ENCODE measurements at regions of chr18 and their contacts with region 1.

Region 1: GRCh38 chr18:10841203-10841602 is 308.2 kb downstream of the PIEZO2 start:
- DNase-seq: no peak
- H3K4me3 ChIP-seq: no peak overlapping the region
- H3K27ac ChIP-seq: no peak overlapping the region
- H3K4me1 ChIP-seq: no peaks in the 10 kb centered on the region
- H3K27me3 ChIP-seq: no peaks in the 10 kb centered on the region
- CTCF ChIP-seq: no peak

Region 2: GRCh38 chr18:10378688-10379363 is 462.4 kb before region 1 on chr18:
- intact Hi-C with region 1: loop called (anchors 5 kb)
- DNase-seq: no peak
- H3K4me3 ChIP-seq: no peak overlapping the region
- H3K27ac ChIP-seq: no peak overlapping the region
- H3K4me1 ChIP-seq: peaks cover 0 to 4% (median 0%) of the 10 kb centered on the region in 4 donors
- H3K27me3 ChIP-seq: no peaks in the 10 kb centered on the region
- CTCF ChIP-seq: no peak